Upper lobe of right lung (tissue), 1 donor: ENCODE measurements at regions of chr3 and their contacts with region 1.

Region 1: DNA sequence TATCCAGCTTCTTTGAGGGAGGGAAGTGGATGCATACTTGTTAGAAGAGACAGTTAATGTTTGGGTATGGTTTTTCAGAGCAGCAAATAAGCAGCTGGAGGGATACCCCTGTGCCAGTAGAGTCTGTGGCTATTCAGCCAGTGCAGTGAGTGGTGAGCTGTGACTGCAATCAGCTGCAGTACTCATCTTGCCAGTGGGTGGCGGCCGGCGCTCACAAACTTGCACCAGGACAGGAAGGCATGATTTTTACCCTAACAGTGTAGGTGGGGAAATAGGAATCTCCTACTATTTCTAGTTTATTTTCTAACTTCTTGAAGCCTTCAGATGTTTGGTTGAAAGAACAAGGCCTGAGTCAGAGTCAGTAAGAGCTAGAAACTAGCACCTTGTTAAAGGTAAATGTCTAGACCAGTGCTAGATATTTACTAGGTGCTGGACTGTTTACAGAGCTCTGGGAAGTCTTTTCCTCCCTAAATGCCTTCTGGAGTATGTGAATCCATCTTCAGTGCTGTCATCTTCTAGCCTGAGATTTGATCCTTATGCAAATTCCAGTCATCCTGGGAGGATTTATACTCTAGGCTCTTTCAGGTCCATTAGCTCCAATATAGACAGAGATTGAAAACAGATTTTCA is 23.6 kb downstream of the TIMP4 start:
- DNase-seq: peak; percentile 86
- ATAC-seq: peak; percentile 95
- H3K4me3 ChIP-seq: no peak overlapping the region
- H3K27ac ChIP-seq: no peak overlapping the region
- H3K4me1 ChIP-seq: peaks cover 12% of the 10 kb centered on the region
- H3K27me3 ChIP-seq: peaks cover 6% of the 10 kb centered on the region
- CTCF ChIP-seq: peak; percentile 91

Region 2: DNA sequence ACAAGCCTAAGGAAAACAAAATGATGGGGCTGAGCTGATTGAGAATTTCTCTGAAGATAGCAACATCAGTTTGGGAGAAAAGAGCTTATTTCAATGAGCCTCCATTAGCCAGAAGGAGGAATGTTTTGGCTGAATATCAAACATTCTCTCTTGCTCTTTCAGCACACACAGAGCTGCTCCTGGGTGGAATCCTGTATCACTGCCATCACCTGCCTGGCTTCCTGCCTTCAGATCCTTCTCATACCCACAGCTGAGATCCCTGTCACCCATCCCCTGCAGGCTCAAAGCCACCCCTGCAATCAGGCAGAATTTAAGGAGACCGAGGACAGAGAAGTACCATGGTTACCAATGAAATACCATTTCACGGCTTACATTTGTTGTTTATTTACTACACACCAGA is 158.2 kb before region 1 on chr3:
- intact Hi-C with region 1: no loop called
- DNase-seq: no peak
- ATAC-seq: no peak
- H3K4me3 ChIP-seq: no peak overlapping the region
- H3K27ac ChIP-seq: no peak overlapping the region
- H3K4me1 ChIP-seq: no peaks in the 10 kb centered on the region
- H3K27me3 ChIP-seq: no peaks in the 10 kb centered on the region
- CTCF ChIP-seq: no peak

Region 3: DNA sequence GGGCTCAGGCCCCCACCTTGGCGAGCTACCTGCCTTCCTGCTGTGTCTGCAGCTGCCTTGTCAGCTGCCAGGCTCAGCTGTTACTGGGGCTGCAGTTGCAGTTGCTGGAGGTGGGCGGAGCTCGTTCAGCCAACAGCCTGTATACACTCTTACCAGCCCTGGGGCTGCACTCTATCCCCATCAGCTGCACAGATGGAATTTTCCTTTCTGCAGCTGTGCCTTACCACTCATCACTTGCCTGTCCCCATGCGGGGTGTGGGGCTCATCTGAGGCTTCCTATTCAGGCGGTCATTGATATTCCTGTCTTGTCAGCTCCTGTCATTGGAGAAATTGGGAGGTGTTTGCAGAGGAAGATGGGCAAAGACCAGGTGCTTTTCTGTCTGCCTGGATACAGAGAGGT is 140.0 kb before region 1 on chr3:
- intact Hi-C with region 1: no loop called
- DNase-seq: no peak
- ATAC-seq: no peak
- H3K4me3 ChIP-seq: no peak overlapping the region
- H3K27ac ChIP-seq: no peak overlapping the region
- H3K4me1 ChIP-seq: no peaks in the 10 kb centered on the region
- H3K27me3 ChIP-seq: peaks cover 8% of the 10 kb centered on the region
- CTCF ChIP-seq: no peak

Region 4: GRCh38 chr3:12294885-12295580 is 159.9 kb after region 1 on chr3:
- intact Hi-C with region 1: no loop called
- DNase-seq: no peak
- ATAC-seq: no peak
- H3K4me3 ChIP-seq: no peak overlapping the region
- H3K27ac ChIP-seq: no peak overlapping the region
- H3K4me1 ChIP-seq: no peaks in the 10 kb centered on the region
- H3K27me3 ChIP-seq: no peaks in the 10 kb centered on the region
- CTCF ChIP-seq: no peak

Region 5: GRCh38 chr3:12484198-12484974 is 349.2 kb after region 1 on chr3 and contains the start of gene TSEN2:
- intact Hi-C with region 1: loop called (anchors 5 kb)
- DNase-seq: peak; percentile 98
- ATAC-seq: peak; percentile 96
- H3K4me3 ChIP-seq: peak within 1 kb of the TSS; percentile 85
- H3K27ac ChIP-seq: peak within 1 kb of the TSS; percentile 84
- H3K4me1 ChIP-seq: peaks cover 19% of the 10 kb centered on the region
- H3K27me3 ChIP-seq: no peaks in the 10 kb centered on the region
- CTCF ChIP-seq: peak; percentile 15
- total RNA-seq, gene TSEN2: 16.0 TPM